Endothelial cell of umbilical vein (primary cell): ENCODE measurements at regions of chr6 and their contacts with region 1.

Region 1: DNA sequence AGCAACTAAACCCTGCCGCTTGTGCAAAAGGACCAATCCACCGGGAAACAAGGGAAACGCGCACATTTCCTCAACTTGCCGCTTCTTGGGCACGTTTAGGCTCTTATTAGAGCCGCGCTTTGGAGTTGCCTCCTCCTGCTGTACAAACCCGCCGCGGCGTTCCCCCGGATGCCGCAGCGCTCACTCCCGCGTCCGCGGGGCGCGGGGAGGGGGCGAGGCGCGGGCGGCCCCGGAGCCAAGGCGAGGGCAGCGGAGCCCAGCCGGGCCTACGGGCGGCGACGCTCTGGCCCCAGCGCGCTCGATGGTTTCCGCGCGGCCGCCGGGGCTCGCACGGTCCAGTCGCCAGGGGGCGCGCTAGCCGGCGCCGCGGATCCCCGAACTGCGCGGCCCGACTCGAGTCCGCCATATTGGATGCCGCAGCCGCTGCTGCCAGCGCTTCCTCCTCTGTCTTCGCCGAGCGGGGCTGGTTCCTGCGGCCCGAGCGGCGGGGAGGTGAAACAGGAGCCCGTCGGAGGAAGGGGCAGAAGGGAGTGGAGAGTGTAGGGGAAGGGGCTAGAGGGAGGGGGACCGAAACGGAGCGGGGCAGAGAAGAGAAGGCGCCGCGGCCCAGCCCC is at the start of gene SCAF8:
- DNase-seq: peak; percentile 81
- H3K4me3 ChIP-seq: peak within 1 kb of the TSS; percentile 74 to 96 (median 89)
- H3K27ac ChIP-seq: peak within 1 kb of the TSS; percentile 90
- H3K4me1 ChIP-seq: peaks cover 20% of the 10 kb centered on the region
- H3K27me3 ChIP-seq: no peaks in the 10 kb centered on the region
- CTCF ChIP-seq: peak; percentile 83 to 85
- POLR2A ChIP-seq: peak; percentile 84
- total RNA-seq, gene SCAF8: 37.4 and 37.8 TPM in 2 replicates

Region 2: DNA sequence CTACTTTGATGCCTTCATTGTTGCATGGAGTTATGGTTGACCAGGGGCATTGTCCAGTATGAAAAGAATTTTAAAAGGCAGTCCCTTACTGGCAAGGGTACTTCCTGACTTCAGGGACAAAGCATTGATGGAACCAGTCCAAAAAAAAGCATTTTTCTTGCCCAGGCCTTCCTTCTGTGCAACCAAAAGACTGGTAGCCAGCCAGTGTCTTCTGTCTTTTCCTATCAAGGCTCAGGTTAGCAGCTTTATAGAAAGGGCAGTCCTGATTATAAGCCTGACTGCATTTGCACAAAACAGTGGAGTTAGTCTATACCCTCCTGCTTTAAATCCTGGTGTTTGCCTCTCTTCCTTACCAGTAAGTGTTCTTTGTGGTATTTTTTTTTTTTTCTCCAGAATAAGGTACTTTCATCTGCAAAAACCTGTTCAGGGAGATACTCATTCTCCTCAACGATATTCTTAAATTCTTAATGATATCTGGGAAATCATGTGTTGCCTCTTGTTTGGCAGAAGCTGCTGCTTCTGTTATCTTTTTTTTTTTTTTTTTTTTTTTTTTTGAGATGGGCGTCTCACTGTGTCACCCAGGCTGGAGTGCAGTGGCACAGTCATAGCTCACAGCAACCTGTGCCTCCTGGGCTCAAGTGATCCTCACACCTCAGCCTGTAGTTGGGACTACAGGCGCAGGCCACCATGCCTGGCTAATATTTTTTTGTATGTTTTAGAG is 34.0 kb after region 1 on chr6:
- CTCF ChIA-PET with region 1: interaction called, 3 read pairs
- POLR2A ChIA-PET with region 1: no interaction called
- dilution Hi-C with region 1: no loop called
- intact Hi-C with region 1: loop called (anchors 2 kb)
- DNase-seq: peak; percentile 54
- H3K4me3 ChIP-seq: no peak overlapping the region
- H3K27ac ChIP-seq: no peak overlapping the region
- H3K4me1 ChIP-seq: peaks cover 9% of the 10 kb centered on the region
- H3K27me3 ChIP-seq: no peaks in the 10 kb centered on the region
- CTCF ChIP-seq: no peak
- POLR2A ChIP-seq: no peak

Region 3: GRCh38 chr6:154805288-154805911 is 72.3 kb after region 1 on chr6:
- CTCF ChIA-PET with region 1: interaction called, 22 read pairs
- POLR2A ChIA-PET with region 1: no interaction called
- dilution Hi-C with region 1: no loop called
- intact Hi-C with region 1: loop called (anchors 1 kb)
- DNase-seq: peak; percentile 69
- H3K4me3 ChIP-seq: no peak overlapping the region
- H3K27ac ChIP-seq: no peak overlapping the region
- H3K4me1 ChIP-seq: no peaks in the 10 kb centered on the region
- H3K27me3 ChIP-seq: no peaks in the 10 kb centered on the region
- CTCF ChIP-seq: peak in 1 of 2 donors; percentile 30
- POLR2A ChIP-seq: no peak

Region 4: GRCh38 chr6:154842833-154843232 is 109.7 kb after region 1 on chr6:
- CTCF ChIA-PET with region 1: no interaction called
- POLR2A ChIA-PET with region 1: interaction called, 3 read pairs
- dilution Hi-C with region 1: no loop called
- intact Hi-C with region 1: loop called (anchors 1 kb)
- DNase-seq: peak; percentile 76
- H3K4me3 ChIP-seq: no peak overlapping the region
- H3K27ac ChIP-seq: no peak overlapping the region
- H3K4me1 ChIP-seq: peaks cover 24% of the 10 kb centered on the region
- H3K27me3 ChIP-seq: no peaks in the 10 kb centered on the region
- CTCF ChIP-seq: no peak
- POLR2A ChIP-seq: no peak